Heart left ventricle (tissue), 16 donors: ENCODE measurements at regions of chr12 and their contacts with region 1.

Region 1: DNA sequence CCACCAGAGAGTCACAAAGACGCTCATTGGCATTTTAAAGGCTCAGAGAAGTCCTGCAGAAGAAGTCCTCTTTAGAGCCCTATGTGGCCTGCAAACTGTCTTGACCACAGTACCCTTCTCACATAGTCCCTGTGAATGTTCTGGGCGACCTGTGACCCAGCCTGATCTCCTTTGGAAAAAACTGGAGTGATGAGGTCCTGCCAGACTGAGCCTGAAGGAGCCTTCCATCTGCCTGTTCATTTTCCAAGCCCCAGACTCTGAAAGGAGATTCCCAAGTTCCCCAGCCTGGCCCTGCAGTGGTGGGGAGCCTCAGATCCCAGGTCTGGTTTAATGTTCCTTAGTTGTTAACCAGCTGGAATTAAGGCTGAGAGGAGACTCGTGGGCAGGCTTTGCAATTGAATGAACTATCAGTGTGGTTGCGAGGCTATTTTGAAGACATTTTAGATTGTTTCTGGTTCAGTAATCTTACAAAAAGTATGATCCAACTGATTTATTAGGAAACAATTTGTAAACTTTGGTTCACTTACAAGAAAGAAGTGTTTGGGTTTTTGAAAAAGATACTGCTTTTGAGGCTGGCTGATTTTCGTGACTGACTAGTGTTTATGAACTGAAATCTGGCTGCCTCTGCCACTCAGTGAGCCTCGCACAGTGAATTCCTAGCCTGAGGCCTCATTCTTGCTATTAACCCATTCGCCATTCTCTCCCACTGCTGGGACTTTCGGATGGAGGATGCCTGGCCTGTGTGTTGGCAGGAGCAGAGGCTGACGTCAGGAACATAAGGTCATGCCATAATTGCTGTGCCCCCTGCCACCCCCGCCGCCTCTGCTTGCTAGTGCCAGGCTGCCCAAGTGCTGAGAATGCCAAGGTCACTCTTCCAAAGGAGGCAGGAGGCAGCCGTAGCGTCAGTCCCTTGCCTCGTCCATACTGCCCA is 249.0 kb downstream of the CACNA1C start:
- DNase-seq: peak in 4 of 5 donors; percentile 73 to 87 (median 78)
- ATAC-seq: peak; percentile 66 to 80 (median 78)
- H3K4me3 ChIP-seq: no peak overlapping the region
- H3K27ac ChIP-seq: peak overlapping the region in 11 of 12 donors; percentile 51 to 89 (median 68)
- H3K4me1 ChIP-seq: peaks cover 0 to 97% (median 63%) of the 10 kb centered on the region in 12 donors
- H3K27me3 ChIP-seq: no peaks in the 10 kb centered on the region
- CTCF ChIP-seq: no peak
- POLR2A ChIP-seq: no peak

Region 2: GRCh38 chr12:480831-481816 is 1820.7 kb before region 1 on chr12:
- intact Hi-C with region 1: loop called in 1 of 10 experiments (anchors 10 kb)
- DNase-seq: peak; percentile 75 to 90 (median 81)
- ATAC-seq: peak; percentile 95 to 98 (median 96)
- H3K4me3 ChIP-seq: peak overlapping the region in 1 of 12 donors; percentile 19
- H3K27ac ChIP-seq: peak overlapping the region; percentile 43 to 96 (median 86)
- H3K4me1 ChIP-seq: peaks cover 0 to 45% (median 23%) of the 10 kb centered on the region in 12 donors
- H3K27me3 ChIP-seq: peaks cover 0 to 2% (median 0%) of the 10 kb centered on the region in 9 donors
- CTCF ChIP-seq: no peak
- POLR2A ChIP-seq: no peak

Region 3: DNA sequence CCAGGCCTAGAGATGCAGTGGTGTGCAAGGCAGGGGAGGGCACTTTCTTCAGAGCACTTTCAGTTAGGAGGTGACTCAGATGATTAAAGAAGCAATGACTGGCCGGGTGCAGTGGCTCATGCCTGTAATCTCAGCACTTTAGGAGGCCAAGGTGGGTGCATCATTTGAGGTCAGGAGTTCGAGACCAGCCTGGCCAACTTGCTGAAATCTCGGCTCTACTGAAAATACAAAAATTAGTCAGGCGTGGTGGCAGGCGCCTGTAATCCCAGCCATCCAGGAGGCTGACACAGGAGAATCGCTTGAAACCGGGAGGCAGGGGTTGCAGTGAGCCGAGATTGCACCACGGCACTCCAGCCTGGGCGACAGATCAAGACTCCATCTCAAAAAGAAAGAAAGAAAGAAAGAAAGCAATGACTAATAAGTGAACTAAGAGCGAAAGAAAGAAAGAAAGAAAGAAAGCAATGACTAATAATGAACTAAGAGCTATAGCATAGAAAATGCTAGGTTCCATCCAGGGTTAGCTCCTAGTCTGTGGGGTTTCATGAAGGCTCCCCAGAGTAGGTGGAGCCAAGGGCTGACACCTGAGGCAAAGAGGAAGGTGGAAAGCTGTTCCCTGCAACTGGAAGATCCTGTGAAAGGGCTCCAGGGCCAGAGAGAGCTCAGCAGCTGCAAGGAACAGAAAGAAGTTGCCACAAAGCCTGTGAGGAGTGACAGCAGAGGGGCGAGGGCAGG is 85.5 kb after region 1 on chr12:
- intact Hi-C with region 1: loop called in 1 of 10 experiments (anchors 5 kb)
- DNase-seq: no peak
- ATAC-seq: no peak
- H3K4me3 ChIP-seq: no peak overlapping the region
- H3K27ac ChIP-seq: no peak overlapping the region
- H3K4me1 ChIP-seq: peaks cover 3 to 83% (median 46%) of the 10 kb centered on the region in 12 donors
- H3K27me3 ChIP-seq: no peaks in the 10 kb centered on the region
- CTCF ChIP-seq: no peak
- POLR2A ChIP-seq: no peak